Naive thymus-derived CD8-positive, alpha-beta T cell (primary cell): ENCODE measurements at regions of chr19 and their contacts with region 1.

Region 1: GRCh38 chr19:6801485-6802086 is 29.1 kb downstream of the VAV1 start:
- DNase-seq: peak; percentile 73 to 93 (median 85)
- ATAC-seq: peak; percentile 77 to 82
- H3K4me3 Mint-ChIP-seq: peak overlapping the region; percentile 85 to 99 (median 88)
- H3K27ac Mint-ChIP-seq: peak overlapping the region; percentile 91 to 99 (median 97)
- H3K4me1 Mint-ChIP-seq: peaks cover 39 to 77% (median 75%) of the 10 kb centered on the region in 4 donors
- H3K27me3 Mint-ChIP-seq: peaks cover 0 to 2% (median 0%) of the 10 kb centered on the region in 5 donors

Region 2: GRCh38 chr19:6737284-6738046 is 64.1 kb before region 1 on chr19 and contains the start of gene GPR108:
- POLR2A ChIA-PET with region 1: interaction called, 18 read pairs
- DNase-seq: peak; percentile 97 to 100 (median 99)
- ATAC-seq: peak; percentile 82 to 84
- H3K4me3 Mint-ChIP-seq: peak within 1 kb of the TSS; percentile 89 to 100 (median 96)
- H3K27ac Mint-ChIP-seq: peak within 1 kb of the TSS; percentile 93 to 99 (median 97)
- H3K4me1 Mint-ChIP-seq: peaks cover 19 to 48% (median 44%) of the 10 kb centered on the region in 4 donors
- H3K27me3 Mint-ChIP-seq: no peaks in the 10 kb centered on the region
- polyA plus RNA-seq, gene GPR108: 51.0 to 77.1 (median 58.0) TPM

Region 3: DNA sequence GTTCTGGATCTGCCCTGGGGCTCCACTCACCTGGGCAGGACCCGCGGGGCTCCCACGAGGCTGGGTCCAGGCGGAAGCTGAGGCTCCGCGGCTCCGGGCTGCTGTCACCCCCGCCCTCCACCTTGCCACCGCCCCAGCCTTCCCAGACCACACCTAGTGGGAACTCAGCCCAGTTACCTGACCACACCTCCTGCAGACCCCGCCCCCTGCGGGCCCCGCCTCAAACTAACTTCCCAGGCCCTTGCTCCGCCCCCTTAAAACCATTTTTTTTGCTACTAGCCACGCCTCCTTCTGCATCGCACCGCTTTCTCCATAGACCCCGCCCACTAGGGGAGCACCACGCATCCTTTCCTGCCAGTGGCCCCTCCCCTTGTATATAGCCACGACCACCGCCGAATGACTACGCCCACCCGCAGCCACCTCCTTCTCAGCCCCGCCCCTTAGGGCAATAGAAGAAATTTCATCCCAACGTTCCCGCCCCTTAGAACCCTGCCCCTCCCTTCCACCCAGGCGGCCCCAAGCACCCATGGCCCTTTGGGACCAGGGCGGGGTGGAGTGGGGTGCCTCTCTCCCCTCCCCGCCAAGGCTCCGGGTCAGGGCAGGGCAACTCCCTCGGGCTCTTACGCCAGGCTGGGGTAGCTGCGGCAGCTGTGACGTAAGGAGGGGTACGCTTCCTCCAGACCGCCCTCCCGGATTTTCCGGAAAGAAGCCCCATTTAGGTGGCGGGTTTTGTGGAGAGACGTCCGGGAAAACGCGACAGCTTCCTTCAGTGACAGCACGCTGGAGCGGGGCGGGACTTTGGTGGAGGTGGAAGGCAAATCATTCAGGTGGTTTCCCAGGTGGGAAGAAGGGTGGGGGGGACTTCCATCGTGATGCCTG is 34.0 kb before region 1 on chr19 and contains the start of gene SH2D3A:
- POLR2A ChIA-PET with region 1: interaction called, 109 read pairs
- DNase-seq: peak; percentile 89 to 98 (median 96)
- ATAC-seq: peak; percentile 79 to 80
- H3K4me3 Mint-ChIP-seq: peak within 1 kb of the TSS; percentile 88 to 99 (median 96)
- H3K27ac Mint-ChIP-seq: peak within 1 kb of the TSS; percentile 89 to 99 (median 97)
- H3K4me1 Mint-ChIP-seq: peaks cover 25 to 61% (median 40%) of the 10 kb centered on the region in 4 donors
- H3K27me3 Mint-ChIP-seq: no peaks in the 10 kb centered on the region
- polyA plus RNA-seq, gene SH2D3A: 23.0 to 47.3 (median 35.7) TPM

Region 4: GRCh38 chr19:6779206-6779605 is 22.4 kb before region 1 on chr19:
- POLR2A ChIA-PET with region 1: interaction called, 109 read pairs
- DNase-seq: no peak
- ATAC-seq: no peak
- H3K4me3 Mint-ChIP-seq: peak overlapping the region in 3 of 10 donors; percentile 4 to 55 (median 41)
- H3K27ac Mint-ChIP-seq: peak overlapping the region in 9 of 10 donors; percentile 33 to 84 (median 57)
- H3K4me1 Mint-ChIP-seq: peaks cover 36 to 81% (median 73%) of the 10 kb centered on the region in 4 donors
- H3K27me3 Mint-ChIP-seq: no peaks in the 10 kb centered on the region

Region 5: GRCh38 chr19:6790194-6791128 is 11.1 kb before region 1 on chr19:
- POLR2A ChIA-PET with region 1: interaction called, 24 read pairs
- DNase-seq: peak in 2 of 10 donors; percentile 27 to 38
- ATAC-seq: peak; percentile 56 to 75
- H3K4me3 Mint-ChIP-seq: peak overlapping the region; percentile 41 to 79 (median 67)
- H3K27ac Mint-ChIP-seq: peak overlapping the region; percentile 77 to 91 (median 86)
- H3K4me1 Mint-ChIP-seq: peaks cover 41 to 83% (median 78%) of the 10 kb centered on the region in 4 donors
- H3K27me3 Mint-ChIP-seq: no peaks in the 10 kb centered on the region

Region 6: DNA sequence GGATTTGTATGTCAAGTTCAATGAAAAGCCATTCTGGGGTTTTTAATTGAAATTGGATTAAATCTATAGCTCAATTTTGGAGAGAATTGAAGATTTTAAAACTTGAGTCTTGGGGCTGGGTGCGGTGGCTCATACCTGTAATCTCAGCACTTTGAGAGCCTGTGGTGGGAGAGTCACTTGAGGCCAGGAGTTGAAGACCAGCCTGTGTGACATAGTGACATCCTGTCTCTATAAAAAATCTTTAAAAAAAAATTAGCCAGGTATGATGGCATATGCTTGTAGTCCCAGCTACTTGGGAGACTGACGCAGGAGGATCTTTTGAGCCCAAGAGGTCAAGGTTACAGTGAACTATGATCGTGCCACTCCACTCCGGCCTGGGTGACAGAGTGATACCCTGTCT is 12.1 kb after region 1 on chr19:
- POLR2A ChIA-PET with region 1: interaction called, 10 read pairs
- DNase-seq: no peak
- ATAC-seq: peak; percentile 53 to 58
- H3K4me3 Mint-ChIP-seq: peak overlapping the region in 5 of 10 donors; percentile 4 to 79 (median 37)
- H3K27ac Mint-ChIP-seq: peak overlapping the region in 8 of 10 donors; percentile 58 to 92 (median 78)
- H3K4me1 Mint-ChIP-seq: peaks cover 41 to 83% (median 79%) of the 10 kb centered on the region in 4 donors
- H3K27me3 Mint-ChIP-seq: no peaks in the 10 kb centered on the region

Region 7: DNA sequence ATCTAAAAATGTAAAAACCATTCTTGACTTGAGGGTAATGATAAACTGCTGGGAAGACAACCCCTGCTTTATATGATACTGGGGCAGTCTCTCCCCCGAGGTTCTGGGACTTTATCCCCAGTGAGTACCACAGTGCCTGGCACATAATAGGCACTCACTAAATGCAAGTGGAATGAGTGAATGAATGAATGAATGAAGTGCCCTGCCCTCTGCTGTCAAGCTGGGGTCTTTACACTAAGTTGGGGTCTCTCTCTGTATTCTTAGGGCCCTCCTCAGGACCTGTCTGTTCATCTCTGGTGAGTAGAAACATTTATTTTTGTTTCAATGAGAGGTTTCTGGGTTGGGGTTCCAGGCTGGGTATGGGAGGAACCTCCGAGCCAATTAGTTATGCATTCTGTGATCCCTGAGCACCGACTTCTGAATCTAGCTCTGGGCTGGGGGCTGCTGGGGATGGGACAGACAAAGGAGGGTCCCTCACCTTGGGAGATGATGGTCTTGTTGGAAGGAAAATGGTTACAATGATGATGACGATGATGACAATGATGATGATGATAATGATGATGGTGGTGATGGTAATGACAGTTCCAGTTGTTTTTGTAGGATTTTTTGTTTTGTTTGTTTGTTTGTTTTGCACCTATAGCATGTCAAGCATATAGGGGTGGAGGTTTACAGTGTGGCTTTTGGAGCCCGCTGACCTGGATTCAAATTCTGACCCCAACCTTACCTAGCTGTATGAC is 41.5 kb after region 1 on chr19:
- POLR2A ChIA-PET with region 1: no interaction called
- DNase-seq: no peak
- ATAC-seq: no peak
- H3K4me3 Mint-ChIP-seq: no peak overlapping the region
- H3K27ac Mint-ChIP-seq: peak overlapping the region in 7 of 10 donors; percentile 40 to 82 (median 56)
- H3K4me1 Mint-ChIP-seq: peaks cover 5 to 8% (median 6%) of the 10 kb centered on the region in 4 donors
- H3K27me3 Mint-ChIP-seq: no peaks in the 10 kb centered on the region